ENCODE measurements at regions of chr2 and their contacts with region 1.

Region 1: GRCh38 chr2:109466673-109467575 is 146.8 kb downstream of the SEPTIN10 start:
- DNase-seq: peak in 1 of 2 experiments; percentile 64
- H3K4me3 ChIP-seq: no peak overlapping the region
- H3K27ac ChIP-seq: no peak overlapping the region
- H3K4me1 ChIP-seq: peaks cover 41% of the 10 kb centered on the region
- H3K27me3 ChIP-seq: no peaks in the 10 kb centered on the region
- CTCF ChIP-seq: no peak

Region 2: GRCh38 chr2:109238580-109238979 is 228.3 kb before region 1 on chr2:
- CTCF ChIA-PET with region 1: no interaction called
- POLR2A ChIA-PET with region 1: no interaction called
- intact Hi-C with region 1: loop called (anchors 1 kb)
- DNase-seq: peak in 1 of 2 experiments; percentile 83
- H3K4me3 ChIP-seq: peak overlapping the region; percentile 37; the same call in 1 of the 2 replicates
- H3K27ac ChIP-seq: peak overlapping the region; percentile 88
- H3K4me1 ChIP-seq: peaks cover 74% of the 10 kb centered on the region
- H3K27me3 ChIP-seq: no peaks in the 10 kb centered on the region
- CTCF ChIP-seq: no peak

Region 3: DNA sequence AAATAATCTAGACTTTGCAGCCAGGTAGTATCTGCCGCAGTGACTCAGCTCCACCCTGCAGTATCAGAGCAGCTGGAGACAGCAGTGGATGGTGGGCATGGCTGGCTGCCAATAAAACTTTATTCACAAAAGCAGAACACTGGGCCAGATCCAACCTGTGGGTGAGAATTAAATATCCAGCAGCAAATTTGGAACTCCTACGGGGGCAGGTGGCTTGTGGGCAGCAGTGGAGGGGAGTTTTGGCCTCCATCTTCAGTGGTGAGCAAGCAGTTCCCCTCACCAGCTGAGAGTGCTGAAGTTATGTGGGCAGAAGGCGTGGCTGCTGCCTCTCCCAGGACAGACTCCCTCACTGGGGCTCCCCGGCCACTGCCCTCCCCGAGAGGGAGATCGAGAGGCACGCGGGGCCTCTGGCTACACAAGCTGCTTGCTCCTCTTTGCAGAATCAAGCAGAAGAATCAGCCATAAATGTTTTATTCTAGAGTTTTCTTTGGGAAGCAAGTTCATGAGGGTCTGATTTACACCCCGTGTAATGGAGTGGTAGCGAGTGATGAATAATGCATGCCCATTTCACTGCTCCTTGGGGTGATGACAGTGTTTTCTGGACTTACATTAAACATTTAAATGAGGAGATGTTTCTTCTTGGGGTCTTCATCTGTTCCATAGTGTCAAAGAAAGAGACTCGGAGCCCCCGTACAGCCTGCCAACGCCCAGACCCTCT is 57.4 kb before region 1 on chr2:
- CTCF ChIA-PET with region 1: no interaction called
- POLR2A ChIA-PET with region 1: interaction called, 3 read pairs
- intact Hi-C with region 1: loop called (anchors 2 kb)
- DNase-seq: peak in 1 of 2 experiments; percentile 8
- H3K4me3 ChIP-seq: no peak overlapping the region
- H3K27ac ChIP-seq: no peak overlapping the region
- H3K4me1 ChIP-seq: peaks cover 21% of the 10 kb centered on the region
- H3K27me3 ChIP-seq: no peaks in the 10 kb centered on the region
- CTCF ChIP-seq: no peak